Activated CD4-positive, alpha-beta T cell treated with anti-CD3 and anti-CD28 coated beads for 36 hours (primary cell): ENCODE measurements at regions of chr6 and their contacts with region 1.

Region 1: GRCh38 chr6:111483736-111484632 is 966 bp upstream of the REV3L start:
- DNase-seq: peak; percentile 92
- ATAC-seq: peak; percentile 52
- H3K4me3 Mint-ChIP-seq: peak overlapping the region; percentile 94
- H3K27ac Mint-ChIP-seq: peak overlapping the region; percentile 100
- H3K4me1 Mint-ChIP-seq: peaks cover 60% of the 10 kb centered on the region
- H3K27me3 Mint-ChIP-seq: no peaks in the 10 kb centered on the region

Region 2: GRCh38 chr6:111011360-111012142 is 472.4 kb before region 1 on chr6:
- CTCF ChIA-PET with region 1: no interaction called
- POLR2A ChIA-PET with region 1: no interaction called
- intact Hi-C with region 1: loop called in 1 of 2 experiments (anchors 5 kb)
- DNase-seq: no peak
- ATAC-seq: peak; percentile 73
- H3K4me3 Mint-ChIP-seq: no peak overlapping the region
- H3K27ac Mint-ChIP-seq: no peak overlapping the region
- H3K4me1 Mint-ChIP-seq: peaks cover 4% of the 10 kb centered on the region
- H3K27me3 Mint-ChIP-seq: no peaks in the 10 kb centered on the region

Region 3: DNA sequence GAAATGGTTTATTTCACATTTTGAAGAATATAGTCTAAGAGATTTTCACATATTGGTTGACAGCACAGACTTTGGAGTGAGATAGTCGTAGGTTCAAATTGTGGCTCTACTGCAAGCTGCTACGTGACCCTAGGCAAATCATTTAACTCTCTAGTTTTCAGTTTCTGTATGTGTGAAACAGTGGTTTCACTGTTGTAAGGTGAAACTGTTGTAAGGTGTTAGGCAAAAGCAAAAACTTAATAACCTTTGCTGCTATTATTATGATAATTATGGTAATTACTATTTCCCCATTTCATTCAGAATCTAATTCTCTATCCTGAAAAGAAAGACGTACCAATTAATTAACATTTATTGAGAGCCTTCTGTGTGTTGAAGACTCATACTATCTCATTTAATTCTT is 145.1 kb before region 1 on chr6:
- CTCF ChIA-PET with region 1: interaction called, 3 read pairs
- POLR2A ChIA-PET with region 1: no interaction called
- intact Hi-C with region 1: loop called (anchors 2 to 5 kb)
- DNase-seq: no peak
- ATAC-seq: peak; percentile 90
- H3K4me3 Mint-ChIP-seq: no peak overlapping the region
- H3K27ac Mint-ChIP-seq: no peak overlapping the region
- H3K4me1 Mint-ChIP-seq: peaks cover 20% of the 10 kb centered on the region
- H3K27me3 Mint-ChIP-seq: no peaks in the 10 kb centered on the region

Region 4: DNA sequence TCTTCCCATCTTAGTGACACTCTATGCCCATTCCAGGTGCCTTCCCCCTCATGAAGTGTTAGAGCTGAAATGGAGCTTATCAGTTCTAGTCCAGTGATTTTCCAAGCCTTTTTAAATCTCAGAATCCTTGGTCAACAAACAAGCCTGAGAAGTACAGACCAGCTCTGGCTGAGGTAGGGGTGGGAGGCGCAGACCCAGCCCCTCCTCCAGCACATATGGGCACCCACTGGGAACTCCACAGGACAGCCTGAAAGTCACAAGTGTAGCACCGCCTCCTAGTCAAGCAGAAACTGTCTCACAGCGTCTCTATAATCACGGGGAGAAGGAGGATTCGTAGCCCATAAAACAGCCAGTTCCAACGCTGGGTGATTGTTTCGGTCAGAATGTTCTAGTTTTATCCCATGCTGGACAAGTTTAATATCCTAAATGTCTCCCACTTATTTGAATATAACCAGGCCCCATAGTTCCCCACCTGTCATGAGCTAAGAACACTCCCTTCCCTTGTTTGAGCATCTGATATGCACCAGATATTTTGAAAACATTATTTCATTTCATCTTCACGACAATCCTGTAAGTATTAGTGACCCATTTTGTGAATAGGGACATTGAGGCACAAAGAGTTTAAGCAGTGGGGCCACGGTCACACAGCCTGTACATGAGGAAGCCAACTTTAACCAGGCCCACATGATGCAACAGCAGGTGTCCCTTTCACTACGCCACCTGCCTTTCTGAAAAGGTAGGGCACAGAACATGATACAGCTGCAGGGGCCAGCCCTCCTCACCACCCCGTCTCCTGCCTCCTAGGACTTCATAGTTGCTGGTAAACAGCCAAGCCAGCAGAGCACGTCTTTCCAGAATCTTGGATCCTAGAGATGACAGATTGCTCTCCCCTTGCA is 81.6 kb after region 1 on chr6:
- CTCF ChIA-PET with region 1: no interaction called
- POLR2A ChIA-PET with region 1: no interaction called
- intact Hi-C with region 1: loop called (anchors 1 to 2 kb)
- DNase-seq: peak; percentile 57
- ATAC-seq: peak; percentile 65
- H3K4me3 Mint-ChIP-seq: no peak overlapping the region
- H3K27ac Mint-ChIP-seq: peak overlapping the region; percentile 88
- H3K4me1 Mint-ChIP-seq: peaks cover 53% of the 10 kb centered on the region
- H3K27me3 Mint-ChIP-seq: no peaks in the 10 kb centered on the region

Region 5: DNA sequence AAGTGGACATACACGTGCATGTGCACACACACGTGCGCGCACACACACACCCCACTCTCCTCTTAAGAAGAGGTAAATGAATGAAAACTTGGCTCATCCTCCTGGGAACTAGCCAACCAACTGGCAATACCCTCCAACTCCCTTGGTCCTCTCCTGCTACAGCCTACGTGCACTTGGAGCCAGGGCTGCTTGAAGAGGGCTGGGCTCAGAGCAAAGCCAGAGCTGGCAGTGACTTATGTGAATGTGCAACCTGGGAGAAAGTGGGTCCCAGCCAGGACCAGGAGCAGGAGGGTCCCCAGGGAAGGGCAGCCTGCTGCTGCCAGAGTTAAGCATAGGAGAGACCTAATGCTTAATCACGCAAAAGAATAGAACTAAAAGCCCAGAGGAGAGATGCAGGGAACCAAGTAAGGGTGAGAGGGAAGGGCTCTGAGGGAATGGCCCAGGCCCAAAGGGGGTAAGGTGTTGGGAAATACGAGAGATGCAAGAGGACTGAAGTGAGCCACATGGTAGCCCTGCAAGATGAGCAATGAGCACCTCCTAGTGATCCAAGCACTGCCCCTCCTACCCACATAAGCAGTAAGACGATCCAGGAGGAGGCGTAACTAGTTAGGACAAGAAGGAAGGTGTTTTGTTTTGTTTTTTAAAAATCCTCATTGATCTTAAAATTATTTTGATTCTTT is 97.0 kb after region 1 on chr6:
- CTCF ChIA-PET with region 1: no interaction called
- POLR2A ChIA-PET with region 1: no interaction called
- intact Hi-C with region 1: no loop called
- DNase-seq: no peak
- ATAC-seq: peak; percentile 26
- H3K4me3 Mint-ChIP-seq: no peak overlapping the region
- H3K27ac Mint-ChIP-seq: peak overlapping the region; percentile 28
- H3K4me1 Mint-ChIP-seq: peaks cover 18% of the 10 kb centered on the region
- H3K27me3 Mint-ChIP-seq: no peaks in the 10 kb centered on the region

Region 6: DNA sequence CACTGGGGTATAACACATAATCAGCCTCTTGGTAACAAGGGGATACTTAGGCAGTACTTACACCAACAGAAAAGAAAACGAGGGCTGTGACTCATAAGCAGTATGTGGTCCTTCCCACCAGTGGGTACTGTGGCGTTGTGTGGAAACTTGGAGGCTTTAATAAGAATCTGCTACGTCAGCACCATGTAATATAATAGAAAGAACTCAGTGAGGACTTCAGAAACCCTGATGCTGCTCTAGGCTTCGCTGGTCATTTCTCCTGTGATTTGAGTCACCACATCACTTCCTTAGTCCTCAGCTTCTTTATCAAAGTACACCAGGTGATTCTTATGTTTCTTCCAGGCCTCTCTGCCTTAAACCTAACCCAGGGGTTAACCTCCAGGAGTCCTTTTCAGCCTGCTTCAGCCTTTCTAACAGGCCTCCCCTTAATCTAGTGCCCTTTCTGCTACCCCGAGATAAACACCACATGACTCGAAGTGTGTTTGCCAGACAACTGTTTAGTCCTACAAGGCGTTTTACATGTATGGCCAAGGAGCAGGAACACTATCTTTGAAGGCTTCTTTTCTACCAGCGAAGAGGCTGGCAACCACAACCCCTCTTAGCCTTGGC is 320.7 kb after region 1 on chr6:
- CTCF ChIA-PET with region 1: no interaction called
- POLR2A ChIA-PET with region 1: no interaction called
- intact Hi-C with region 1: loop called in 1 of 2 experiments (anchors 2 kb)
- DNase-seq: peak; percentile 83
- ATAC-seq: peak; percentile 62
- H3K4me3 Mint-ChIP-seq: peak overlapping the region; percentile 60
- H3K27ac Mint-ChIP-seq: peak overlapping the region; percentile 98
- H3K4me1 Mint-ChIP-seq: peaks cover 98% of the 10 kb centered on the region
- H3K27me3 Mint-ChIP-seq: no peaks in the 10 kb centered on the region

Region 7: DNA sequence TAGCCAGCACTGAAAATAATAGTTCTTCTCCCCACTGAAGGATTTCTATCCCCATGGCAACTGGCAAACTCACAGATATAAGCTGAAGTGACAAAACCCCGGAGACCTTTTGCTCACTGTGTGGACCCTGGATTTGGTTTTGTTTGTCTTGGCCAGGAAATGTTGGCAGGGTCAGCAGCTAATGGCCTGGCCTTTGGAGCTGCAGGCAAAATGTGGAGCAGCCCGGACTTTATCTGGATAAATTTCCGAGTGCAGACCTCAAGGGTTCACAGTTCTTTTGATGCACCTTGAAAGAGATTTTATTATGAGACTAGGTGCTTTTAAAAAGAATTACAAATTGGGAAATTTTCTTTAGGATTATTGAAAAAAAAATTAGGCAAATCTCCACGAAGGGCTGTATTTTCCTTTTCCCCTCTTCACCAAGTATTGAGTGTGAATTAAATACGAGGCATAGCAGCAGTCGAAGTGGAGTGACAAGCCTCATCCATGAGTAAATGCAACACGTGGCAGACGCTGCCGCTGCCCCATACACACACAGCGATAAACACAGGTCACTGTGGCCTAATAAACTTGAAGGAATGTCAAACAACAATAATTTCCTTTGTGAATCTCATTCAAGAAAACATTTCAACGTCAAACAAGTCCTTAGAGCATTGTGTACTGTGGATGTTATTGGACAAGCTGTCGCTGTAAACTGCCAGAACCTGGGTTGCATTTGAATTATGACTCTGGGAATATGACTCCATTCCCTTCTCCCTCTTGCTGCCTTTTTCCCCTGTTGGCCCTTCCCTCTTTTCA is 534.8 kb after region 1 on chr6:
- CTCF ChIA-PET with region 1: no interaction called
- POLR2A ChIA-PET with region 1: no interaction called
- intact Hi-C with region 1: loop called in 1 of 2 experiments (anchors 1 kb)
- DNase-seq: no peak
- ATAC-seq: no peak
- H3K4me3 Mint-ChIP-seq: no peak overlapping the region
- H3K27ac Mint-ChIP-seq: peak overlapping the region; percentile 43
- H3K4me1 Mint-ChIP-seq: peaks cover 78% of the 10 kb centered on the region
- H3K27me3 Mint-ChIP-seq: no peaks in the 10 kb centered on the region

Region 8: DNA sequence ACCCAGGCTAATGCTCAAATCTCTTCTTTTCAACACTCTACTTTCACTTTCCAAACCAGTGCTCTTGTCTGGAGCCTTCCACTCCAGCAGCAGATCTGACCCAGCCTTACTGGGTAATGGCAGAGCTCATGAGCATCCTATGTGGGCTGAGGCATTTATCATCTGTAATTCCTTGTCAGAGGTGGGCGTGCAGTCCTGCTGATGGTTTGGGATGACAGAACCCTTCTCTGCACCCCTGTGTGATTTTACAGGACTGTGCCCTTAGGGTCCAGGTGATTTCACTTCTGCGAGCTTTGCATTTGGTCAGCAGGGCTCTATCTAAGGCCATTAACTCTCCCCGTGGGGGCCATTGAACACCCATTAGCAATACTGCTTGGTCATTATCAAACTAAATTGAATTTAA is 715.0 kb after region 1 on chr6:
- CTCF ChIA-PET with region 1: no interaction called
- POLR2A ChIA-PET with region 1: no interaction called
- intact Hi-C with region 1: no loop called
- DNase-seq: no peak
- ATAC-seq: no peak
- H3K4me3 Mint-ChIP-seq: no peak overlapping the region
- H3K27ac Mint-ChIP-seq: no peak overlapping the region
- H3K4me1 Mint-ChIP-seq: no peaks in the 10 kb centered on the region
- H3K27me3 Mint-ChIP-seq: peaks cover 10% of the 10 kb centered on the region